Naive thymus-derived CD4-positive, alpha-beta T cell (primary cell): ENCODE measurements at regions of chr2 and their contacts with region 1.

Region 1: GRCh38 chr2:96638144-96639121 is at the start of gene KANSL3:
- DNase-seq: peak; percentile 81 to 96 (median 88)
- ATAC-seq: peak; percentile 93
- H3K4me3 ChIP-seq: peak within 1 kb of the TSS; percentile 97
- H3K4me3 Mint-ChIP-seq: peak within 1 kb of the TSS; percentile 89 to 96 (median 93)
- H3K27ac ChIP-seq: peak within 1 kb of the TSS; percentile 90
- H3K27ac Mint-ChIP-seq: peak within 1 kb of the TSS; percentile 87 to 95 (median 92)
- H3K4me1 ChIP-seq: peaks cover 18% of the 10 kb centered on the region in 2 donors
- H3K4me1 Mint-ChIP-seq: peaks cover 28 to 46% (median 39%) of the 10 kb centered on the region in 7 donors
- H3K27me3 ChIP-seq: no peaks in the 10 kb centered on the region
- H3K27me3 Mint-ChIP-seq: peaks cover 0 to 10% (median 0%) of the 10 kb centered on the region in 5 donors
- total RNA-seq, gene KANSL3: 54.0 to 65.0 (median 55.9) TPM

Region 2: GRCh38 chr2:96305091-96305978 is 333.1 kb before region 1 on chr2 and contains the start of gene SNRNP200:
- CTCF ChIA-PET with region 1: no interaction called
- POLR2A ChIA-PET with region 1: no interaction called
- intact Hi-C with region 1: loop called in 1 of 2 experiments (anchors 5 kb)
- DNase-seq: peak; percentile 77 to 92 (median 90)
- ATAC-seq: peak; percentile 96
- H3K4me3 ChIP-seq: peak within 1 kb of the TSS; percentile 85
- H3K4me3 Mint-ChIP-seq: peak within 1 kb of the TSS; percentile 94 to 100 (median 99)
- H3K27ac ChIP-seq: peak within 1 kb of the TSS; percentile 94
- H3K27ac Mint-ChIP-seq: peak within 1 kb of the TSS; percentile 97 to 100 (median 99)
- H3K4me1 ChIP-seq: peaks cover 30 to 41% of the 10 kb centered on the region in 2 donors
- H3K4me1 Mint-ChIP-seq: peaks cover 41 to 61% (median 58%) of the 10 kb centered on the region in 7 donors
- H3K27me3 ChIP-seq: no peaks in the 10 kb centered on the region
- H3K27me3 Mint-ChIP-seq: no peaks in the 10 kb centered on the region
- total RNA-seq, gene SNRNP200: 165 to 255 (median 212) TPM

Region 3: DNA sequence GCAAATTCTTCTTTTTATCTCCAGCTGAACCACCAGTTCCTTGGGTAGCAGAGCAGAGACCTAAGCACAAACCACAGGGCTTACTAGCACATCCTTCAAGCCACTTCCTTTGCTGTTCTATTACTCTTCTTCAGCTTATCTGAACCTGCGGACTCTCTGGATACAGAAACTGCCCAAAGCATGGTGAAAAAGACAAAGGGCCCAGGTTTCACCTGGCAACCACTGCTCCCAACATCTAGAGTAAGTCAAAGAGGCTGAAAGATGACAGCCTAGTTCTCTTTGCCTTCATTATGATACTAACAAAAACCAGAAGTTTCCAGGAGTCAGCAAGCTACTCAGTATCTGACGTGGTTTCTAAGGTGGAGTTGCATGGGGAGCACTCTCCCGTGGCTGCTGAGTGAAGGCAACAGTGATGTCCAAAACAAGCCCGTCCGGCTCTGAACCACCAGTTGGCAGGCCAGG is 43.7 kb before region 1 on chr2:
- CTCF ChIA-PET with region 1: interaction called, 4 read pairs
- POLR2A ChIA-PET with region 1: no interaction called
- intact Hi-C with region 1: loop called in 1 of 2 experiments (anchors 5 kb)
- DNase-seq: peak in 7 of 9 donors; percentile 19 to 52 (median 41)
- ATAC-seq: peak; percentile 84
- H3K4me3 ChIP-seq: no peak overlapping the region
- H3K4me3 Mint-ChIP-seq: peak overlapping the region in 9 of 10 donors; percentile 2 to 80 (median 48)
- H3K27ac ChIP-seq: peak overlapping the region; percentile 19
- H3K27ac Mint-ChIP-seq: peak overlapping the region; percentile 58 to 92 (median 78)
- H3K4me1 ChIP-seq: peaks cover 20 to 32% of the 10 kb centered on the region in 2 donors
- H3K4me1 Mint-ChIP-seq: peaks cover 22 to 63% (median 31%) of the 10 kb centered on the region in 7 donors
- H3K27me3 ChIP-seq: no peaks in the 10 kb centered on the region
- H3K27me3 Mint-ChIP-seq: no peaks in the 10 kb centered on the region

Region 4: DNA sequence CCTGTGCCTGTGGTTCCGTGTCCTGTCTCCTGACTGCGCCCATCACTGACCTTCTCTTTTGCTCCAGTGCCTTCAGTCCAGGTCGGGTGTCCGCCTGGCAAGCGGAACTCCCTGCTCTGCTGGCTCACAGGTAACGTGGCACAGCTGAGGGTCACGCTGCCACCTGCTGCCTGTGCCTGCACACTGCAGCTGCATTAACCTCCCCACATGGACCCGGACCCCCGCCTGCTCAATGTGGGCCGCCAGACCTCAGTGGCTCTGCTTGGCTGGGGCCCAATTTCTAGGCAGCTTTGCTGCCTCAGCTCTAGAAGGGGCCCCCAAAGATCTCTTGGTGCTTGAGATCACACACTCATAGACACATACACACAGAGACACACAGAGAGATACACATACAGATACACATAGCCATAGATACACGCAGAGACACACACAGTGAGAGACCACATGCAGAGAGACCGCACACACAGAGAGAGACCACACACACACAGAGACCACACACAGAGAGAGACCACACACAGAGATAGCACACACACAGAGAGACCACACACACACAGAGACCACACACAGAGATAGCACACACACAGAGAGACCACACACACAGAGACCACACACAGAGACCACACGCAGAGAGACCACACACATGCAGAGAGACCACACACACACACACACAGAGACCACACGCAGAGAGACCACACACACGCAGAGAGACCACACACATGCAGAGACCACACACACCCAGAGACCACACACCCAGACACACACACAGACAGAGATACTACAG is 162.8 kb after region 1 on chr2:
- CTCF ChIA-PET with region 1: no interaction called
- POLR2A ChIA-PET with region 1: no interaction called
- intact Hi-C with region 1: loop called (anchors 1 to 2 kb)
- DNase-seq: peak; percentile 41 to 72 (median 63)
- ATAC-seq: peak; percentile 94
- H3K4me3 ChIP-seq: no peak overlapping the region
- H3K4me3 Mint-ChIP-seq: no peak overlapping the region
- H3K27ac ChIP-seq: no peak overlapping the region
- H3K27ac Mint-ChIP-seq: no peak overlapping the region
- H3K4me1 ChIP-seq: peaks cover 10 to 20% of the 10 kb centered on the region in 2 donors
- H3K4me1 Mint-ChIP-seq: peaks cover under 1 to 4% (median 2%) of the 10 kb centered on the region in 7 donors
- H3K27me3 ChIP-seq: no peaks in the 10 kb centered on the region
- H3K27me3 Mint-ChIP-seq: no peaks in the 10 kb centered on the region

Region 5: DNA sequence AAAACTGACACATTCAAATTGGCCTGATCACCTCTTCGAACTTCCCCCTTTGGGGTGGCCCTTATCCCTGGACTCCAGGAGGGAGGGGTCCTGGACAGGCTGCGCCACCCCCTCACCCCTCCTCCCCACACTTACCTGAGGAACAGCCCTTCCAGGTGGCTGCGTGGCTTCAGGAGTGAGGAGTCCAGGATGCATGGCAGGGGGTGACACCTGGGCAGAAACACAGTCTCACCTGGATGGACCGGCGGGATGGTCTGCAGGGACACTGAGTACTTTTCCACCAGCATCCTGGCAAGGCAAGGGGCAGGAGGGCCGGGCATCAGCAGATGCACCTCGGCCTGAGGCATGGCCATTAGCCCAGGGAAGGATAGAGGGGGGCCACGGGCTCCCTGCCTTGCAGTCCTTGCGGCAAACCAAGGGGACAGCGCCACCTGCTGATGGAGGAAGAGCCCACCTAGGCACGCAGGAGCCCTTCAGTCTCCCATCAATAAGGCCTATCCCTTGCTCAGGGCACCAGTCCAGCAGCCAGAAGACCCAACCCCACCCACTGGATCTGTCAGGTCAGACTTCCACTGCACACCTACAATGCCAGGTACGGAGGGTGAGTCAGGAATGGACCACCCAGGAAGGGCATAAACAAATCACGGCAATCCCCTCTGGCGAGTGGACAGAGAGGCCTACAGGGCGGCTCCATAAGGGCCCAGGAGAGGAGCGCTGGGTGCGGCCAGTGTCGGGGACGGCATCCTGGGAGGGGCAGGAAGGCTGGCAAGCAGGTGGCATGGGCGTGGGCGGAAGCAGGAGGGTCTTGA is 321.9 kb after region 1 on chr2:
- CTCF ChIA-PET with region 1: no interaction called
- POLR2A ChIA-PET with region 1: interaction called, 5 read pairs
- intact Hi-C with region 1: loop called (anchors 5 to 10 kb)
- DNase-seq: peak; percentile 58 to 87 (median 75)
- ATAC-seq: peak; percentile 50
- H3K4me3 ChIP-seq: no peak overlapping the region
- H3K4me3 Mint-ChIP-seq: peak overlapping the region; percentile 37 to 83 (median 64)
- H3K27ac ChIP-seq: no peak overlapping the region
- H3K27ac Mint-ChIP-seq: peak overlapping the region; percentile 55 to 99 (median 92)
- H3K4me1 ChIP-seq: peaks cover 42 to 47% of the 10 kb centered on the region in 2 donors
- H3K4me1 Mint-ChIP-seq: peaks cover 36 to 57% (median 53%) of the 10 kb centered on the region in 7 donors
- H3K27me3 ChIP-seq: no peaks in the 10 kb centered on the region
- H3K27me3 Mint-ChIP-seq: peaks cover 0 to 2% (median 0%) of the 10 kb centered on the region in 5 donors